GM10248 (cell line): ENCODE measurements at regions of chr2 and their contacts with region 1.

Region 1: GRCh38 chr2:216666461-216667233 is 28.7 kb downstream of the IGFBP5 start:
- DNase-seq: peak; percentile 79
- CTCF ChIP-seq: peak; percentile 99

Region 2: DNA sequence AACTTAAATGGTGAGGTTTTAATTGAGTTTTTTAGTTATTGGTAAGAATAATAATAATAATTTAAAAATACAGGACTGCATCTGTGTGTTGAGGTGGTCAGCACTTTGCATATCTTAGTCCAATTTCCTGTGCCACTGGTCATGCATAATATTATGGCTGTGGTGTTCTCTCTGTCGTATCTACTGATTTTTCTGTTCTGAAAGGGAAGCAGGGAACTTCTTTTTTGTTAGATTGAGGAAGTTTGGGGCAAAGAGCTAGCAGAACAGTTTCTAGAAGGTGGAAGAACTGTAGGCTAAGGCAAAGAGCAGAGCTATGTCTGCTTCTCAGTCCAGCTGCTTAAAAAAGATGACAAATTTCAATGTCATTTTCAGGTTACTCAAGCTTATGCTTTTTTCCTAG is 483.2 kb before region 1 on chr2:
- CTCF ChIA-PET with region 1: interaction called, 10 read pairs
- POLR2A ChIA-PET with region 1: no interaction called
- DNase-seq: no peak
- CTCF ChIP-seq: no peak

Region 3: DNA sequence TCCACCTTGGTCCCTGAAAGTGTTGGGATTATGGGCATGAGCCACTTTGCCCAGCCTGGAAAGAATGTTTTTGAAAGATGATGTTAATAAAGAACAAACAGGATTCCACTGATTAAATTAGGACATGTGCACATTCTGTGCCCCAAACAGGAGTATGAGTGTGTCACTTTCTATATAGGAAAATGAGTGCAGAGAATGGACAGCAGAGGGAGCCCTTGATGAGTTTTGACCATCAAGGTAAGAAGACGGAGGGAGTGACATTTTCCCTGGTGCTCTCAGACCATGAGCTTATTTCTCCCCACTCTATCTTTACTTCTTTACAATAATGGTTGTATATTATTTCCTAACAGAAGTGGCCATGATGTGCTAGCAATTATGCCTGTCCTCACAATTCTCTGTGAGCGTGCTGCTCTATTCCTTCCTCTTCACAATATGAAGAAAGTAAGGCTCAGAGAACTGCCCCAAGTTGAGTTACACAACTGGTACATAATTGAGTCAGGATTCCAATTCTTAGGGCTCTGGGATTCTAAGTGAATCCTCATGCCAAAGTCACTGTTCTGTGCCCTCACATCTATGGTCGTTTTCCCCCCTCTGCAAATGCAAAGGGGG is 147.4 kb before region 1 on chr2:
- CTCF ChIA-PET with region 1: interaction called, 325 read pairs
- POLR2A ChIA-PET with region 1: interaction called, 5 read pairs
- DNase-seq: peak; percentile 65
- CTCF ChIP-seq: peak; percentile 60

Region 4: DNA sequence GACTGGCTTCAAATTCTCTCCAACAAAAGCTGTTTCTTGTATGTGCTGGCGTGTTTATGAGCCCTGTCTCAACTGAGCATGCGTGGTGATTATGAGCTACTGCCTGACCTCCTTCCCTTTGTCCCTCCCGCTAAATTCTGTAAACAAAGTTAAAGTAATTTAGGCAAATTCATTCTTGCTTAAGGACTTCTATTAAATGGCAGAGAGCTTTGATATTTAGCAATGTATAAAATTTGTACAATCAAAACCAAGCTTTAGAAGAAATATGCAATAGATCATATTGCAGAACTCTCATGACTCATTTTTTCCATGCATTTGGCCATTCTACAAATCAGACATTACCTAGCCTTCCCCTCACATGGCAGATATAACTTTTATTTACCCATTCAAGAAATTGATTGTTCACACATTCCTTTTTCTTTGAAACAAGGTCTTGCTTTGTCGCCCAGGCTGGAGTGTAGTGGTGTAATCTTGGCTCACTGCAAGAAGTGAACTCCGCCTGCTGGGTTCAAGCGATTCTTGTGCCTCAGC is 15.2 kb before region 1 on chr2:
- CTCF ChIA-PET with region 1: interaction called, 114 read pairs
- POLR2A ChIA-PET with region 1: no interaction called
- DNase-seq: no peak
- CTCF ChIP-seq: no peak

Region 5: GRCh38 chr2:216679221-216680019 is 12.8 kb after region 1 on chr2:
- CTCF ChIA-PET with region 1: interaction called, 22 read pairs
- POLR2A ChIA-PET with region 1: no interaction called
- DNase-seq: no peak
- CTCF ChIP-seq: no peak

Region 6: GRCh38 chr2:216687646-216688045 is 21.0 kb after region 1 on chr2:
- CTCF ChIA-PET with region 1: interaction called, 12 read pairs
- POLR2A ChIA-PET with region 1: no interaction called
- DNase-seq: no peak
- CTCF ChIP-seq: peak; percentile 14